Esophagus muscularis mucosa (tissue), 4 donors: ENCODE measurements at regions of chr5 and their contacts with region 1.

Region 1: GRCh38 chr5:55159763-55160492 is at the start of gene GPX8:
- DNase-seq: peak; percentile 45
- H3K4me3 ChIP-seq: peak within 1 kb of the TSS; percentile 41 to 62 (median 50)
- H3K27ac ChIP-seq: peak within 1 kb of the TSS; percentile 56 to 68 (median 65)
- H3K4me1 ChIP-seq: peaks cover 4 to 13% (median 7%) of the 10 kb centered on the region in 4 donors
- H3K27me3 ChIP-seq: peaks cover 0 to 8% (median 0%) of the 10 kb centered on the region in 4 donors
- CTCF ChIP-seq: peak; percentile 61 to 63 (median 63)
- EP300 ChIP-seq: no peak
- POLR2A ChIP-seq: no peak
- total RNA-seq, gene GPX8: 8.4 to 12.5 (median 9.3) TPM

Region 2: DNA sequence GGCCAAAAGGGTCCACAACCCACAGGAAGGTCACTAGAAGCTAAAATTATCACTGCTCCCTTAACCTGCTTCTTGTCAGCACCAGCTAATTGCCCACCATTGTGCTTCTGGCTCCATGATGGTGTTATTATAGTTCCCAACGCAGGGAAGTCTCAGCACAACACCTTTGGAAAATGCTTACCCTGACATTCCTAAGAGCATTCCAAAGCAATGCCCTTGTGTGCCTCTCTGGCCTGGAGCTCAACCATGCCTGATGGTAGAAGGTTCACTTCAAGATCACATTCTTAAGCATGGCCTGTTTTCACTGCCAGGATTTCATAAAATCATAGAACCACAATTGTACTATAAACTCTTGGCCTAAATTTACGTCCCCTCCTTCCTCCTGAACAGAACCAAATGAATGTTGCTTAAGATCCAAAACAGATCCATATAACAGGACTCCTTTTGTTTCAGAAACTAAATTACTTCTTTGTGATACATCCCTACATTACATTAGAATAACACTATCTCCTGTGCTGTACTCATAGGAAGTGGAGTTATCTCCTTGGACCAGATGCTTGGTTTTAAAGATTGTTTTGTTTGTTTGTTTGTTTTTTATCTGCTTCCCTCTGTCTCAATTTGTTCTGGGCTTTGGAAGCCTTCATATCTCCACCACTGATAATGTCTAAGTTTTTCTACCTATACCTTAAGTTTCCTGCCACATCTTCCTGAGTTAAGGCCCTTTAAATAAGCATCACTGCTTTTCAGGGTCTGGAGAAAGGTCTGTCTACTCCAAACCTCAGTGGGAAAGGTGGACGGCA is 881.7 kb before region 1 on chr5:
- intact Hi-C with region 1: no loop called
- DNase-seq: peak; percentile 21
- H3K4me3 ChIP-seq: no peak overlapping the region
- H3K27ac ChIP-seq: no peak overlapping the region
- H3K4me1 ChIP-seq: peaks cover 0 to 6% (median 0%) of the 10 kb centered on the region in 4 donors
- H3K27me3 ChIP-seq: no peaks in the 10 kb centered on the region
- CTCF ChIP-seq: no peak
- EP300 ChIP-seq: no peak
- POLR2A ChIP-seq: no peak

Region 3: GRCh38 chr5:54547711-54548250 is 612.1 kb before region 1 on chr5:
- intact Hi-C with region 1: no loop called
- DNase-seq: peak; percentile 92
- H3K4me3 ChIP-seq: no peak overlapping the region
- H3K27ac ChIP-seq: no peak overlapping the region
- H3K4me1 ChIP-seq: peaks cover 11 to 19% (median 15%) of the 10 kb centered on the region in 4 donors
- H3K27me3 ChIP-seq: no peaks in the 10 kb centered on the region
- CTCF ChIP-seq: no peak
- EP300 ChIP-seq: no peak
- POLR2A ChIP-seq: no peak

Region 4: DNA sequence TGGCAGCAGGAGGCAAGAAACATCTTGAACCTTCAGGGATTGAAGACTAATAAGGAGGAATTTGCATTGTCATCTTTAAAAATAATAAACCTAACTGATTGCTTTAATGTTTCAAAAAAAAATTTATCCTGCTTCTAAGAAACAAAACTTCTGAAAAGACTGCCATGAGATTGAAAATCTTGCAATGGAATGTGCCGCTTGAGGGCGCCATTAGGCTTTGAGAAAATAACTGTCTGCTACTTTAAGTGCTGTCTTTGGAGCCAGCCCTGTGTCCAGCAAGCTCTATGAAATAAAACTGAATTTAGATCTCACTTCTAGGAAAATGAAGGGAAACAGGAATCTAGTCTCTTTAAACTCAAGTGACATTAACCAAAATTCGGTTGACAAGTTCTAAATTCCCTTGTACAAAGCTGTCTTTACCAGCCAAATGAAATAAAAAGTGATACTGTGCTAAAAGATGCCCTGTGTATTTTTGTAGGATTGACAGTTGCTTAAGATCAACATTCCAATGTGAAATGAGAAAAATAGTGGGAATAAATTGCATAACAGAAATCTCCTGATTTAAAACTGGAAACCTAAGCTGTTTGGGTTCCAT is 253.9 kb before region 1 on chr5:
- intact Hi-C with region 1: loop called (anchors 5 kb)
- DNase-seq: peak; percentile 92
- H3K4me3 ChIP-seq: no peak overlapping the region
- H3K27ac ChIP-seq: no peak overlapping the region
- H3K4me1 ChIP-seq: peaks cover 0 to 2% (median 0%) of the 10 kb centered on the region in 4 donors
- H3K27me3 ChIP-seq: peaks cover 0 to 8% (median 0%) of the 10 kb centered on the region in 4 donors
- CTCF ChIP-seq: peak; percentile 45 to 61 (median 55)
- EP300 ChIP-seq: no peak
- POLR2A ChIP-seq: no peak

Region 5: DNA sequence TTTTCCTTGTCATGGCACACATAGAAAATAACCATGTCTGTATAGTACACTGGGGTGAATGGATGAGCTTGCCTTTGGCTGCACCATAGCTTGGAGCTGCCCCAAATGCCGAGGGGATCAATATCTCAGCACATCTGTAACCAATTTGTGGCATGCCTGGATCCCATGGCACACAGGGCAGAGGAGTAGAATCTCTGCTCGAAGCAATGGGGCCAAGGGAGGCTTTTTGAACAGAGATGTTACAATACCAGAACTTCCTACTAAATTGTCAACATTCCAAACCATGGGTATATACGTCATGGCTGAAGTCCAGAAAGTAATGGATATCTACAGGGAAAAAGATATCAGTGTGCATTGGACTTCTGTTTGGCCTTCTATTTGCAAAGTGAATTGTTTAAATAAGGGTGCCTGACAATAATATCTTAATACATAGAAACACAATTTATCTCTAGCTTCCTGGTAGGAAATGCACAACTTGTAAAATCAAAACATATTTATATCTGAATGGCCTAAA is 213.6 kb before region 1 on chr5:
- intact Hi-C with region 1: loop called (anchors 5 kb)
- DNase-seq: peak; percentile 78
- H3K4me3 ChIP-seq: no peak overlapping the region
- H3K27ac ChIP-seq: no peak overlapping the region
- H3K4me1 ChIP-seq: no peaks in the 10 kb centered on the region
- H3K27me3 ChIP-seq: peaks cover 0 to 6% (median 0%) of the 10 kb centered on the region in 4 donors
- CTCF ChIP-seq: no peak
- EP300 ChIP-seq: no peak
- POLR2A ChIP-seq: no peak

Region 6: DNA sequence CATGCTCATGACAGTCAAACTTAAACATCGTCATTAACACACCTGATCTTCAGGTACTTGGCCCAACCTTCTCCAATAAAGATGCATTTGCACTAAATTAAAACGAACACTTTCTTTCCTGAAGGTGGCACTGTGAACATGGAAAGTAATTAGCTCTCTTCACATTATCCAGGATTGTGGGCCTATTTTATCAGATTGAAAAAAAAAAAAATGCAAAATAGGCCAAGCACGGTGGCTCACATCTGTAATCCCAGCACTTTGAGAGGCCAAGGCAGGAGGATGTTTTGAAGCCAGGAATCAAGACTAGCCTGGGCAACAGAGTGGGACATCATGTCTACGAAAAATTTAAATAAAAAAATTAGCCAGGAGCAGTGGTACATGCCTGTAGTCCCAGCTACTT is 27.4 kb after region 1 on chr5:
- intact Hi-C with region 1: no loop called
- DNase-seq: no peak
- H3K4me3 ChIP-seq: no peak overlapping the region
- H3K27ac ChIP-seq: no peak overlapping the region
- H3K4me1 ChIP-seq: no peaks in the 10 kb centered on the region
- H3K27me3 ChIP-seq: peaks cover 0 to 66% (median 2%) of the 10 kb centered on the region in 4 donors
- CTCF ChIP-seq: no peak
- EP300 ChIP-seq: no peak
- POLR2A ChIP-seq: no peak